Natural killer cell (primary cell): ENCODE measurements at regions of chr9 and their contacts with region 1.

Region 1: GRCh38 chr9:94783102-94783664 is 56.7 kb downstream of the AOPEP start:
- DNase-seq: peak; percentile 26 to 67
- ATAC-seq: peak in 2 of 3 donors; percentile 54 to 69
- H3K4me3 ChIP-seq: no peak overlapping the region
- H3K4me3 Mint-ChIP-seq: no peak overlapping the region
- H3K27ac ChIP-seq: no peak overlapping the region
- H3K27ac Mint-ChIP-seq: no peak overlapping the region
- H3K4me1 ChIP-seq: no peaks in the 10 kb centered on the region
- H3K4me1 Mint-ChIP-seq: peaks cover 7 to 10% of the 10 kb centered on the region in 2 donors
- H3K27me3 ChIP-seq: no peaks in the 10 kb centered on the region
- H3K27me3 Mint-ChIP-seq: no peaks in the 10 kb centered on the region
- CTCF ChIP-seq: peak; percentile 67

Region 2: DNA sequence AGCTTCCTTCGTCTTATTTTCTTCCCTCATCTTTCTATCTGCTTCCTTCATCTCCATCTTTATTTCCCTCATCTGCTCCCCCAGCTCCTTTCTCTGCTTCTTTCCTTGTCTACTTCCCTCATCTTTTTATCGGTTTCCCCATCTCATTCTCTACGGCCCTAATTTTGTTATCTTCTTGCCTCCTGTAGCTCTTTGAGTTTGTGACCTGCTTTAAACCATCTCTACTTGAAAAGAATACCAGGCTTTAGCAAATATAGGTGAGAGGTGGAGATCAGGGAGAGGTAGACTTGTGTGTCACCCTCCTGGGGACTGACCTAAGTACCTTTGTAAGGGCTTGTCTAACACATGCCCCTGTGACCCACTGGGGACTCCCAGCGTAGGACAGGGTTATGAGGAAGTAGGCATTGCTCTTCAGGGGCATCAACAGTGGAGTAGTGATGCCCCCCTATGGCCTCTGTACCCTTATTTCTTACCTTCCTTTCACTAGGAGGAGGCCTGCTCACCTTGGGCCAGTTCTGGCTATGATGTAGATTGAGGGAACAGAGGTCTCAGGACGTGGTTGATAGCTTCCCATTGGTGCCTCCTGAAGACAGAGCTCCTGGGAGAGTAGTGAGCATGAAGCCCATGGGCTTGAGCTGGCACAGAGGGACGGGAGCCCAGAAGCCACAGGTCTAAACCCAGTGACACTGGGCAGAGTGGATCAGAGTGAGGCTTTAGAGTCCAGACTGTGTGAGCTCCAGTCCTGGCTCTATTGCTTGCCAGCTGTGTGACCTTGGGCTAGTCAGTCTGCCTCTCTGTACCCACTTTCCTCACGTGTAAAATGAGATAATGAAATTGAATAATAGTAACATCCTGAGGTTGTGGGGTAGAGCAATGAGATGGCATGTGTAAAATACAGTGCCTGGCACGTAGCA is 134.9 kb after region 1 on chr9:
- intact Hi-C with region 1: loop called (anchors 1 kb)
- DNase-seq: peak in 1 of 2 donors; percentile 60
- ATAC-seq: peak; percentile 67 to 96 (median 94)
- H3K4me3 ChIP-seq: no peak overlapping the region
- H3K4me3 Mint-ChIP-seq: no peak overlapping the region
- H3K27ac ChIP-seq: no peak overlapping the region
- H3K27ac Mint-ChIP-seq: peak overlapping the region in 1 of 2 donors; percentile 17
- H3K4me1 ChIP-seq: no peaks in the 10 kb centered on the region
- H3K4me1 Mint-ChIP-seq: peaks cover 0 to 14% of the 10 kb centered on the region in 2 donors
- H3K27me3 ChIP-seq: no peaks in the 10 kb centered on the region
- H3K27me3 Mint-ChIP-seq: no peaks in the 10 kb centered on the region
- CTCF ChIP-seq: no peak

Region 3: GRCh38 chr9:95127249-95128176 is 344.3 kb after region 1 on chr9:
- intact Hi-C with region 1: loop called (anchors 1 kb)
- DNase-seq: peak; percentile 67 to 79
- ATAC-seq: peak; percentile 89 to 98 (median 98)
- H3K4me3 ChIP-seq: no peak overlapping the region
- H3K4me3 Mint-ChIP-seq: no peak overlapping the region
- H3K27ac ChIP-seq: no peak overlapping the region
- H3K27ac Mint-ChIP-seq: no peak overlapping the region
- H3K4me1 ChIP-seq: peaks cover 6% of the 10 kb centered on the region
- H3K4me1 Mint-ChIP-seq: peaks cover 5% of the 10 kb centered on the region in 2 donors
- H3K27me3 ChIP-seq: no peaks in the 10 kb centered on the region
- H3K27me3 Mint-ChIP-seq: no peaks in the 10 kb centered on the region
- CTCF ChIP-seq: peak; percentile 98

Region 4: DNA sequence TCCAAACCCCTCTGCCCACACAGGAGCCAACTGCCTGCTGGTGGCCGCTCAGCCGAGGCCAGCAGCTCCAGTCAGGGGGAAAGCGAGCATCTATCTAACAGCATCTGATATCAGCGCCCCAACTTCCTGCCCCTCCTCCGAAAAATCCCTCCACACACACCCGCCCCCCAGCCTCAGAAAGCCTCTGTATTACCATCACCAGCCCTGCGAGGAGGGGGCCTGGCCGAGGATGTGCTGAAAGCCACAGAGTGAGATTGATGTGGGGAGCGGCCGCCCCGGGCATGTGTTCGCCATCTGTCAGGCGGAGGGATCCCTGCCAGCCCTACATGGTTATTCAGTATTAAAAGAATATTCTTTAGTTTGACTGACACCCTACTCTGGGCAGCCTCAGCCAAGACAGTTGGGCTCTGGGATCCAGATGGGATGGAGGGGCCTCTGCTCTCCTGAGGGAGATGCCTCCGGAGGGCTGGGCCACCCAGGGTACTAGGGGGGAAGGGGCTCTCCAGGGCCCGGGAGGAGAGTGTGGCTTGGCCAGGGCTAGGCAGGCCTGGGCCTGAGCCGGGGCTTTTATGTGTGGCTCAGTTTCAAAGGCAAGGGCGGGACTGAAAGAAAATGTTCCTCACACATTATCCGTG is 1420.8 kb after region 1 on chr9:
- intact Hi-C with region 1: loop called (anchors 10 kb)
- DNase-seq: peak; percentile 27 to 49
- ATAC-seq: peak; percentile 66 to 87 (median 80)
- H3K4me3 ChIP-seq: no peak overlapping the region
- H3K4me3 Mint-ChIP-seq: peak overlapping the region; percentile 0
- H3K27ac ChIP-seq: no peak overlapping the region
- H3K27ac Mint-ChIP-seq: no peak overlapping the region
- H3K4me1 ChIP-seq: peaks cover 14% of the 10 kb centered on the region
- H3K4me1 Mint-ChIP-seq: peaks cover 18 to 19% of the 10 kb centered on the region in 2 donors
- H3K27me3 ChIP-seq: no peaks in the 10 kb centered on the region
- H3K27me3 Mint-ChIP-seq: peaks cover 0 to 7% of the 10 kb centered on the region in 2 donors
- CTCF ChIP-seq: no peak